Heart left ventricle (tissue), 16 donors: ENCODE measurements at regions of chr18 and their contacts with region 1.

Region 1: DNA sequence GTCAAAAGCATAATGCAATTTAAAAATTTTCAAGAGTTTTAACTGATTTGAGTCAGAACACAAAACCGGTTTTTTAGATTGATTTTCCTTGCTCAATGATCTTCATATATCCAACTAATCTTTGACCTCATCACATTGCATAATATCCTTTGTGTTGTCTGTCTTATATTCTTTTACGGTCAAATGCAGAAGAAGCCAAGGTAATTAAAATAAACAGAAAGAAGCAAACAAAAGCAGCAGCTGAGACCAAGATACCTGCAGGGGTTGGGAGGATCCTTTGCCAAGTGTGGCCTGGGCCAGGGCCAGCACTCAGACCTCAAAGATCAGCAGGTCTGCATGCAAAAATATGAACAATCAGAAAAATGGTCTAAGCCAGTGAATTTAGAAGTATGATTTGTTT is 428.9 kb upstream of the NETO1 start:
- DNase-seq: no peak
- ATAC-seq: no peak
- H3K4me3 ChIP-seq: no peak overlapping the region
- H3K27ac ChIP-seq: no peak overlapping the region
- H3K4me1 ChIP-seq: no peaks in the 10 kb centered on the region
- H3K27me3 ChIP-seq: no peaks in the 10 kb centered on the region
- CTCF ChIP-seq: no peak
- POLR2A ChIP-seq: no peak

Region 2: DNA sequence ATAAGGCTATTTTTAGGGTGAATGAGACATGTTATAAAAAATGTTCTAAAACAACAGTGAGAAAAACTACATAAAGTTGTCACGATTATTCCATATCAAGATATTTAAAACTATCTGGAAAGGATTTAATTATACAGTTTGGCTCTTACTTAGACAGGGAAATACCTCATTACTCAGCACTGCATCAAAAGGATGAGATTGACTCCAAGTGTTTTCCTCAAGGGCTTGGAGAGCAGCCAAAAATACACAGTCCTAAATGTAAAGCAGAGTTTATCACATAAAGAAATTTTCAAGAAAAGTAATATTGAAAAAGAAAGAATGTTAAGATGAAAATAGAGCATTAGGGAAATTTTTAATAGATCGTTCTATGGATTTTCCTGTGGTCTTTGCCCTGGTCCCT is 143.4 kb before region 1 on chr18:
- intact Hi-C with region 1: no loop called
- DNase-seq: no peak
- ATAC-seq: no peak
- H3K4me3 ChIP-seq: no peak overlapping the region
- H3K27ac ChIP-seq: no peak overlapping the region
- H3K4me1 ChIP-seq: no peaks in the 10 kb centered on the region
- H3K27me3 ChIP-seq: no peaks in the 10 kb centered on the region
- CTCF ChIP-seq: no peak
- POLR2A ChIP-seq: no peak

Region 3: DNA sequence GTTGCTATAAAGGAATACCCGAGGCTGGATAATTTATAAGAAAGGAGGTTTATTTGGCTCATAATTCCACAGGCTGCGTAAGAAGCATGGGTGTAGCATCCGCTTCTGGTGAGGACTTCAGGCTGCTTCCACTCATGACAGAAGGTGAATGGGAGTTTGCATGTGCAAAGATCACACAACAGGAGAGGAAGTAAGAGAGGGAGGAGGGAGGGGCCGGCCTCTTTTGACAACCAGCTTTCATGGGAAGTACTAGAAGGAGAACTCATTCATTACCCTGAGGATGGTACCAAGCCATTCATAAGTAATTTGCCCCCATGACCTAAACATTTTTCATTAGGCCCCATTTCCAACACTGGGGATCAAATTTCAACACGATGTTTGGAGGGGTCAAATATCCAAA is 42.1 kb before region 1 on chr18:
- intact Hi-C with region 1: loop called in 1 of 10 experiments (anchors 5 kb)
- DNase-seq: no peak
- ATAC-seq: no peak
- H3K4me3 ChIP-seq: no peak overlapping the region
- H3K27ac ChIP-seq: no peak overlapping the region
- H3K4me1 ChIP-seq: no peaks in the 10 kb centered on the region
- H3K27me3 ChIP-seq: no peaks in the 10 kb centered on the region
- CTCF ChIP-seq: no peak
- POLR2A ChIP-seq: no peak